Ovary (tissue), 10 donors: ENCODE measurements at regions of chr15 and their contacts with region 1.

Region 1: DNA sequence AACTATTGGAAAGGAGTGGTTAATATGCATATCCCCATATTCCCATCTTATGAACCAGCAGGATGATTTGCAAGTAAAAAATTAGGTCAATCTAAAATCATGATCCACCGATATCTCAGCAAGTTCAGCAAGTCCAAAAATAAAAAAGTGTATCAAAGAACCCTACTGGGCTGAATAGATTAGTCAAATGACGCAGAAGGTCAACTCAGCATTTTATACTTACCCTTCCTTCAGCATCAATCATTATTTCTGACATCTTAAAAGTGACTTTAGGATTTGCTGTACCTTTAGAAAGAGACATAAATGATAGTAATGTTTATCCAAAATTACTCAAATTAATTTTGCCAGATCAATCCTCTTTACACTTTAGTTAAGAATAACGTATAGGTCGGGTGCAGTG is 32.6 kb downstream of the DPP8 start:
- DNase-seq: no peak
- H3K4me3 ChIP-seq: no peak overlapping the region
- H3K27ac ChIP-seq: no peak overlapping the region
- H3K4me1 ChIP-seq: no peaks in the 10 kb centered on the region
- H3K27me3 ChIP-seq: no peaks in the 10 kb centered on the region
- CTCF ChIP-seq: no peak
- EP300 ChIP-seq: no peak
- POLR2A ChIP-seq: no peak

Region 2: DNA sequence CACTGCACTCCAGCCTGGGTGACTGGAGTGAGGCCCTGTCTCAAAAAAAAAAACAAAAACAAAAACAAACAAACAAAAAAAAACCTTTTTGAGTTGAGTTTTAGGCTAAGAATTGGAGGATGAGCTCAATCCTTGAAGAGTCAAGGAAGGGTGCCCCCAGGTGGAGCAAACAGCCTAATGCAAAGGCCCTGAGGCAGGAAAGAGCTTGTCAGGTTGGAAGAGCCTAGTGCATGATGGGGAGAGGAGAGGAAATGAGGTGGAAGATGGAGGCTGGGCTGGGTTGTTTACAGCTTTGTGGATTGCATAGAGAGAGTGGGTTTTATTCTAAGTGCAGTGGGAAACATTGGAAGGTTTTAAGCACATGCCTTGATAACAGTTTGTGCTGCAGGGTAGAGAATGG is 1335.5 kb before region 1 on chr15:
- intact Hi-C with region 1: loop called in 1 of 4 experiments (anchors 5 kb)
- DNase-seq: no peak
- H3K4me3 ChIP-seq: no peak overlapping the region
- H3K27ac ChIP-seq: no peak overlapping the region
- H3K4me1 ChIP-seq: peaks cover 5% of the 10 kb centered on the region
- H3K27me3 ChIP-seq: no peaks in the 10 kb centered on the region
- CTCF ChIP-seq: no peak
- EP300 ChIP-seq: no peak
- POLR2A ChIP-seq: no peak